Calu3 (cell line): ENCODE measurements at regions of chr5 and their contacts with region 1.

Region 1: DNA sequence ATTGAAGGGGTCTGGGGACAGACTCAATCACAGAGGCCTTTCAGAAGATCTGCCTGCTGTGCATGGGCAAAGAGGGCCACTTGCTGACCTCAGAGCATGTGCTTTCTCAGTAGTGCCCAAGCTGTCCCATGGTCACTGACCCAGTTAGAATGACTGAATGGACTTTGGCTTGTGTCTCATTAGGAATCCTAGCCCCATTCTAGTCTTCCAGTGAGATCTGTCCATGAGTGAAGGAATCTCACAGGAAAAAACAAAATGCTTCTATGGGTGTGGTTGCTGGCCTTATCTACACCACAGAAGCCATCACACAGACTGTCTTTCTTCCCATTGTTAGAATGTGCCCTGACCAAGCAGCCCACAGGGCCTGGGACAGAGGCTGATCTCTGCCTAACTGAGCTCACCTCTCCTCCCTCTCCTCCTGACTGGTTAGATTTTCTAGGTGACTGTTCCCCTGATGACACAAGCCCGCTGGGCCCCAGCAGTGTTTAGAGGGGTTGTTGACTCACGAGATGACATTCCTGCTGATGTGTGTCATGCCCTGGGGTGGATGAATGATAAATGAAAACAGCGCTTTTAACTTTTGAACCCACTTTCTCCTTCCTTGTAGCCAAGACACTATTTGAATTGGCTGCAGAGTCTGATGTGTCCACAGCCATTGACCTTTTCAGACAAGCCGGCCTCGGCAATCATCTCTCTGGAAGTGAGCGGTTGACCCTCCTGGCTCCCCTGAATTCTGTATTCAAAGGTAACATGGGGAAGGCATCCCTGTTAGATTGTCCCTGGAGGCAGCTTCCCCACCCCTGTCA is 24.8 kb downstream of the TGFBI start:
- DNase-seq: peak; percentile 90
- H3K4me3 Mint-ChIP-seq: peak overlapping the region; percentile 38
- H3K27ac Mint-ChIP-seq: peak overlapping the region; percentile 74
- H3K4me1 Mint-ChIP-seq: peaks cover 71% of the 10 kb centered on the region
- H3K27me3 Mint-ChIP-seq: no peaks in the 10 kb centered on the region
- CTCF ChIP-seq: no peak

Region 2: DNA sequence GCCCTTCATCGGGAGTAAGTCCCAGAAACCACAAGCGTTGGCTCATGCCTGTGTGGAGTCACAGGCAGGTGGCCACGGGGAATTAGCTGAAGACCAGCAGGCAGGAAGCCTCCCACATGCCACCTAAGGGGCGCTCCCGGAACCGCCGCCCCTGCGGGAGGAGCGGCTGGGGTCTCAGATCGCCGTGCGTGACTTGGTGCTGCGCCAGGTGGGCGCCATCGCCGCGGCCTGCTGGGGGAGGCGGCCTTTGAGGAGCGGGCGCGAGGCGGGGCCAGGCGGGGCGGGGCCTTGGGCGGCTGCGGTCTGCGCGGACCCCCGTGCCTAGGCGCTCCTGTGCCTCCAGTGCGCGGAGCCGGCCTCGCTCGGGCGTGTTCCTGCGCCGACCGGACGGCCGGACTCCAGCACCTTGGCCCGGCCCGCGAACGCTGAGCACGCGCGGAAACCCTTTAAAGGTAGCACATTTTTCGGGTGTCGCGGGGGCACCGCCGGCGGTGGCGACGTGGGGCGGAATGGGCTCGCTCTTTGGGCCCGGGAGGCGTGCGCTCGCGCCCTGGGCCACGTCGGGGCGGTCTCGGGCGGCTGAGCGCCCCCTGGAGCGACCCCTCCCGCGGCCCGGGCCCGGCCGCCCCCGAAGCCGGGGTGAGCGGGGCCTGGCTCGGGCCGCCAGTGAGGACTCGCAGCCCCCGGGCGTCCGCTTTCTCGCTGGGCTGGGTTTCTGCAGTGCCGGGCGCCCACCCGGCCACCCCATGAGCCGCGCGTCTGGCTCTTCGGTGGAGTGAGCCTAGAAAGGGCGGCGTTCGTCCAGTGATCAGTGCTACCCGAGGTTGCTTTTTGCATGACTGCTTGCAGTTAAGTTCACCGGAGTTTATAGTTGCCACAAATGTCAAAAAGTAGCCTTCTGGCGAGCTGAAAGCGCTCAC is 123.2 kb before region 1 on chr5:
- CTCF ChIA-PET with region 1: no interaction called
- intact Hi-C with region 1: no loop called
- DNase-seq: peak; percentile 58
- H3K4me3 Mint-ChIP-seq: peak overlapping the region; percentile 77
- H3K27ac Mint-ChIP-seq: no peak overlapping the region
- H3K4me1 Mint-ChIP-seq: no peaks in the 10 kb centered on the region
- H3K27me3 Mint-ChIP-seq: peaks cover 23% of the 10 kb centered on the region
- CTCF ChIP-seq: no peak

Region 3: GRCh38 chr5:135977375-135977928 is 76.1 kb before region 1 on chr5:
- CTCF ChIA-PET with region 1: interaction called, 6 read pairs
- intact Hi-C with region 1: loop called (anchors 2 kb)
- DNase-seq: peak; percentile 79
- H3K4me3 Mint-ChIP-seq: no peak overlapping the region
- H3K27ac Mint-ChIP-seq: no peak overlapping the region
- H3K4me1 Mint-ChIP-seq: no peaks in the 10 kb centered on the region
- H3K27me3 Mint-ChIP-seq: no peaks in the 10 kb centered on the region
- CTCF ChIP-seq: peak; percentile 66

Region 4: GRCh38 chr5:136018814-136019783 is 34.4 kb before region 1 on chr5:
- CTCF ChIA-PET with region 1: interaction called, 5 read pairs
- intact Hi-C with region 1: loop called (anchors 1 kb)
- DNase-seq: no peak
- H3K4me3 Mint-ChIP-seq: no peak overlapping the region
- H3K27ac Mint-ChIP-seq: peak overlapping the region; percentile 88
- H3K4me1 Mint-ChIP-seq: peaks cover 86% of the 10 kb centered on the region
- H3K27me3 Mint-ChIP-seq: no peaks in the 10 kb centered on the region
- CTCF ChIP-seq: no peak

Region 5: DNA sequence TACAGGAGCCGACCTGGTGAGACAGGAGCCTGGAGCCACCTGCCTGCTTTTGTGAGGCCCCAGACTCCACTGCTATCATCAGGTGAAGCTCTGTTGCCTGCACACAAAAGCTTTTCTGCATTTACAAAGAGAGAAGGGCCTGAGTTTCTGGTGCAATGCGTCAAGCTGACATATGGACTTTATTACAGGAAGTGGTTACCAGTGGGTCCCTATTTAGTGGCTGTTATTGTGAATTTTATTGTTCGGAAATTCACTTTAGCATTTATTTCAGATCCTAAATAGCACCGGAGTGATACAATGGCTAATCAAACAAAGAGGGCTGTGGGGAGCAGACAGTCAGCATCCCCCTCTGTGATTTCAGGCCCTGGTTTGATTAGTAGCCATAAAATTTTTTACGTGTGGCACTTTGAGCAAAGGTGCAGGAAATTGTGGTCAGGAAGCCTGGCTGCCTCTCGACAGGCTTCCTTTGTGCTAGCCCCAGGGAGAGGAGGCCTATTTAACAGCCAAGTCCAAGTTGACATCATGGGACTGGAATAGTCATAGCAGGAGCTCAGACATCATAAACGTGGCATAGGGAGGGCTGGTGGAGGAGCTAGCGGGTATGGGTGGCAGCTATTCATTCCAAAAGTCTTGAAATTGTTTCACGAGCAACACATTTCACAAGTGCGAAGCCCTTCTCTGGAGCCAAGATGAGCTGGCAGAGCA is 16.4 kb before region 1 on chr5:
- CTCF ChIA-PET with region 1: interaction called, 10 read pairs
- intact Hi-C with region 1: no loop called
- DNase-seq: peak; percentile 58
- H3K4me3 Mint-ChIP-seq: no peak overlapping the region
- H3K27ac Mint-ChIP-seq: peak overlapping the region; percentile 69
- H3K4me1 Mint-ChIP-seq: peaks cover 66% of the 10 kb centered on the region
- H3K27me3 Mint-ChIP-seq: no peaks in the 10 kb centered on the region
- CTCF ChIP-seq: no peak